Endothelial cell of umbilical vein (primary cell): ENCODE measurements at regions of chr13 and their contacts with region 1.

Region 1: GRCh38 chr13:44106256-44107152 is 226.8 kb downstream of the LACC1 start:
- DNase-seq: no peak
- H3K4me3 ChIP-seq: no peak overlapping the region
- H3K27ac ChIP-seq: no peak overlapping the region
- H3K4me1 ChIP-seq: no peaks in the 10 kb centered on the region
- H3K27me3 ChIP-seq: peaks cover 7 to 9% of the 10 kb centered on the region in 2 experiments
- CTCF ChIP-seq: no peak
- POLR2A ChIP-seq: no peak

Region 2: DNA sequence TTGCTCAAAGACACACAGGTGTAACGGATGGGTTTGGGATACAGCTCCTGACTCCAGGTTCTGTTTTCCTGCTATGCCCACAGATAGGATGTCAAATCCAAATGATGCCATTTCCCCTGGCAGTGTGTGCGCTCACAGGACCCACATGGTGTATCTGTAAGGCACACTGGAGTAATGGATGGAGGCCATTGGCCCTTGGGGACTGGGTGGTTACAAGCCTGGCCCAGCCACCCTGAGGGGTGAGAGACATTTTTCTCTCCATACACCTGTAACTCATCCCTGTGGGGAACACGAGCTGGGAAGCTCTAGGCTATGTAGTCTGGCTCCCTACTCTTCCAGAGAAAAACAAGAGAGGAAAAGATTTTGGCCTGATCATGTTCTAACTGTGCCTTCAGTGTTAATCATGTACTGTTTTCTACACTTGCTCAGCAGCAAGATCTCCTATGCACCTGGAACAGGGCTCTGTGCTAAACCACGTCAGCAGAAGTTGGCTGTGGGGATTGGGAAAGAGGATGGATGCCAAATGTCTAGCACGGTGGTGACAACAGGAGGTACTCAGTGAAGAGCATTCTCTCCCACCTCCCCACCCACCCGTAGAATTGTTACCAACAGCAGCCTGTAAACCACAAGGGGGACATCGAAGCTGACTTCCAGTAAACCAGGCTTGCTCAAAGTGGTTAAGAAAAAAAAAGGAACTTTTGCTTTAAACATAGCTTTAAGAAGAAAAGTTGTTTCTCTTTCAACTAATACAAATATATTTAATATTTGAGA is 10.2 kb after region 1 on chr13:
- CTCF ChIA-PET with region 1: interaction called, 10 read pairs
- POLR2A ChIA-PET with region 1: no interaction called
- dilution Hi-C with region 1: no loop called
- intact Hi-C with region 1: no loop called
- DNase-seq: no peak
- H3K4me3 ChIP-seq: no peak overlapping the region
- H3K27ac ChIP-seq: peak overlapping the region; percentile 35
- H3K4me1 ChIP-seq: peaks cover 10% of the 10 kb centered on the region
- H3K27me3 ChIP-seq: no peaks in the 10 kb centered on the region
- CTCF ChIP-seq: peak in 1 of 2 donors; percentile 18
- POLR2A ChIP-seq: no peak

Region 3: DNA sequence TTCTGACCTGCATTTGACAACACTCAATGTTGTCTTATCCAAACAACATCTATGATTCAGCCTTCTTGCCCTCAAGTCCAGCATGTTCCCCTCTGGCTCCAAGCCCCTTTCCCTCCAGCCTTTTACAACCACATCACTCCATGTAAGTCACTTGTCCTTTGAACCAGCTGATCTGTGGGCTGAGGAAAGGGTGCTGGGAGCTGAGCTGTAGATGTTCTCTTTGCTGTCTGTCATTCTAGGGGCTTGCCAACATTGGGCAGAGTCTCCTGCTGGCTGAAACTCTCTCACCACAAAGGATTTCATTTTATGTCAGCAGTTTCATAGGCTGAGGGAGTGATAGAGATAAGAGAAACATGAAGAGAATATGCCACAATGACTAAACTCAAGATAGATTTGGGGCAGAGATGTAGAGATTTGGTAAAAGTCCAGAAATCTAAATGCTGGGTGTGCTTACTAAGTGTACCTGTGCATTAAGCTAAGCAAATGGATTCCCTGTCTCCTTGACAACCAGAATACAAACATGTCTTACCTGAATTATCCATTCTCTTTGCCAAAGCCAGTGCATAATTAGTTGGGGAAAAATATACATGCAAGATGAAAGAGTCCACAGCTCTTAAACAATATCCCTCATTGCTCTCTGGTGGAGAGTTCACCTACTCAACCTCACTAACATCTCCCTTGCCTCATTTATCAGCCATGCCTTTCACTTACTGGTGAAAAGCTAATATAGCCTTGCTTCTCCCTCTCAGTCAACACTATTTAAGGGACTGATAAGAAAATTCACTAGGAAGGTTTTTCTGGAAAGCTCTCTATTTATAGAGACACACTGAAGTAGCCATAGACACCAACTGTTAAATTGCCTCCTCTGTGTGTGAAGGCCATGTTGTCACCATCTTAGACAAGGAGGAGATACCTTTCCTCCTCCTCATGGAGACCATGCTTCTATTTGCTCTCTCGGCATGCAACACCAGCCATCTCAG is 91.6 kb after region 1 on chr13:
- CTCF ChIA-PET with region 1: no interaction called
- POLR2A ChIA-PET with region 1: no interaction called
- dilution Hi-C with region 1: no loop called
- intact Hi-C with region 1: no loop called
- DNase-seq: no peak
- H3K4me3 ChIP-seq: no peak overlapping the region
- H3K27ac ChIP-seq: no peak overlapping the region
- H3K4me1 ChIP-seq: no peaks in the 10 kb centered on the region
- H3K27me3 ChIP-seq: no peaks in the 10 kb centered on the region
- CTCF ChIP-seq: no peak
- POLR2A ChIP-seq: no peak